CD4-positive, alpha-beta memory T cell (primary cell): ENCODE measurements at regions of chr10 and their contacts with region 1.

Region 1: DNA sequence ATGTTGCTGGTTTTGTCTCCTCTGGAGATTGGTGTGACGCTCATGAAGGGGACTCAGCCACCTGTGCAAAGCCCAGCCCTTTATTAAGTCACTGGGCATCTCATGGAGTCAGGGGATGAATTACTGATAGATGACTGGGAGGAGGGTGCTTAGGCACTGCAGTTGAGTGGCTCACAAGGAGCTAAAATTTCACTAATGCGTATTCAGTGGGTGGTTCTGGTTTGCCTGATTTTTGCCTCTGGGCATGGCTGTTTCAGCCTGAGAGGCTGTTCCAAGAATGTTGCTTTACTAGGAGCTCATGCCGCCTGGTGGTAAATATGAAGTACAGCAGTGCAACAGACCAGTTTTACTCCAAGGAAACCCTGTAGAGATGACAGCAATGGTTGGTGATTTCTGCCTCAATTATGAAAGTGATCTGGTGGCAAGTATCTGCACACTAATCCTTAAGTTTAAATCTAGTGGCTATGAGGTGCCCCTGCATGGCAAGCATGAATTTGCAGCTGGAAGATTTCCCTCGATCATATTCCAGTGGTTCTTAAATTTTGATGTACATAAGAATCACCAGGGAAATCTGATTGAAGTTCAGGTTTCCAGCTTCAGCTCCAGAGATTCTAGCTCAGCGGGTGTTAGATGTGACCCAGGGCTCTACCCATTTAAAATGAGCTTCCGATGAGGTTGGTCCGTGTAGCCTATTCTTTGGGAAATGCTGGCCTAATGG is 19.9 kb downstream of the ACTA2 start:
- DNase-seq: peak; percentile 48 to 59 (median 55)
- H3K4me3 ChIP-seq: no peak overlapping the region
- H3K4me3 Mint-ChIP-seq: no peak overlapping the region
- H3K27ac ChIP-seq: no peak overlapping the region
- H3K27ac Mint-ChIP-seq: peak overlapping the region in 5 of 7 donors; percentile 13 to 76 (median 60)
- H3K4me1 ChIP-seq: peaks cover 15% of the 10 kb centered on the region
- H3K4me1 Mint-ChIP-seq: peaks cover 13 to 22% (median 15%) of the 10 kb centered on the region in 4 donors
- H3K27me3 ChIP-seq: no peaks in the 10 kb centered on the region
- H3K27me3 Mint-ChIP-seq: no peaks in the 10 kb centered on the region

Region 2: GRCh38 chr10:88565072-88565471 is 367.6 kb before region 1 on chr10:
- CTCF ChIA-PET with region 1: interaction called, 8 read pairs
- POLR2A ChIA-PET with region 1: no interaction called
- intact Hi-C with region 1: loop called (anchors 1 kb)
- DNase-seq: peak in 1 of 5 donors; percentile 17
- H3K4me3 ChIP-seq: no peak overlapping the region
- H3K4me3 Mint-ChIP-seq: no peak overlapping the region
- H3K27ac ChIP-seq: no peak overlapping the region
- H3K27ac Mint-ChIP-seq: no peak overlapping the region
- H3K4me1 ChIP-seq: peaks cover 5% of the 10 kb centered on the region
- H3K4me1 Mint-ChIP-seq: peaks cover 3 to 6% (median 6%) of the 10 kb centered on the region in 4 donors
- H3K27me3 ChIP-seq: no peaks in the 10 kb centered on the region
- H3K27me3 Mint-ChIP-seq: peaks cover 0 to 2% of the 10 kb centered on the region in 2 donors

Region 3: DNA sequence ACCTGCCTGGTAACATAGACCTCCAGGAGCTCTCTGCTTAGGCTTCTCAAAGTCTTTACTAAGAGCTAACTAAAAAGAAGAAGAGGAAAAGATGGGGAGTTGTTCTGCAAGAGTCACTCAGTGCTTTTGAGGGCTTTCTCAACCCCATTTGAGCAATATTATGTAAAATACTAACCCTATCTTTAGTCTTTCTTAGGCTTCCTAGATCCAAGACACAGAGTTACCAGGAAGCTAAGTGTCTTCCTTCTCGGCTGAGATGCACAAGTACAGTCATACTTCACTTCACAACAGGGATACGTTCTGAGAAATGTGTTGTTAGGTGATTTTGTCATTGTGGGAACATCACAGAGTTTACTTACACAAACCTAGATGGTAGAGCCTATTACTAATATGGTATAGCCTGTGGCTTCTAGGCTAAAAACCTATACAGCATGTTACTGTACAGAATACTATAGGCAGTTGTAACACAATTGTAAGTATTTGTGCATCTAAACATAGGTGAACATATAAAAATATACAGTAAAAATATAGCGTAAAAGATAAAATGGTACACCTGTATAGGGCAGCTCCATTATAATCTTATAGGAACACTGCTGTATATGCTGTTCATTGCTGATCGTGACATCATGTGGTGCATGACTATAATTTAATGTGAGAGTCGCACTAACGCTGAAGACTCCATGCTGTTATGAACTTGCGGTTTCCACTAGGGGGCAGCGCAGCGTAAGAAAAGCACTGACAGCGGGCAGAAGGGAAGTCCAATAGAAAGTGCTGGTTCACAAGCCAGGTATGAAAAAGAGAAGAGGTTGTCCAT is 97.4 kb before region 1 on chr10:
- CTCF ChIA-PET with region 1: interaction called, 507 read pairs
- POLR2A ChIA-PET with region 1: interaction called, 23 read pairs
- intact Hi-C with region 1: loop called (anchors 1 kb)
- DNase-seq: peak; percentile 80 to 86 (median 82)
- H3K4me3 ChIP-seq: no peak overlapping the region
- H3K4me3 Mint-ChIP-seq: no peak overlapping the region
- H3K27ac ChIP-seq: no peak overlapping the region
- H3K27ac Mint-ChIP-seq: peak overlapping the region in 1 of 7 donors; percentile 29
- H3K4me1 ChIP-seq: peaks cover 46% of the 10 kb centered on the region
- H3K4me1 Mint-ChIP-seq: peaks cover 26 to 34% (median 30%) of the 10 kb centered on the region in 4 donors
- H3K27me3 ChIP-seq: no peaks in the 10 kb centered on the region
- H3K27me3 Mint-ChIP-seq: no peaks in the 10 kb centered on the region

Region 4: DNA sequence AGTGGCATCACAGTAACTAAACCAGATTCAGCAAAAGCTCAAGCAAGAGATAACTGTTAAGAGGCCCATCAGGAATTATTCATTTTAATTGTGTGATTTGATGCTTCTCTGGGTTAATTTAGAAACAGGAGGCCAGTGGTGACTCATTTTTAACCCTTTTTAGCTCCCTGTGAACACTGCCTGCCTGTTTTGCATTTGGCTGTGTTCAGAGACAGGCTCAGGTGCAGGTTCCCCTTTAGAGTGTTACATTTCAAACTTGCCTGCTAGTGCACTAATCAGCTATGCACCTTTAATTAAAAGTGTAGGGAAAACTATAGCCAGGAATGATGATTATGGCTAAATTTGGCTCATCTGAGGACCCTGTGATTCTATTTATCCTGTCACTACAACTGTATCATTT is 46.1 kb before region 1 on chr10:
- CTCF ChIA-PET with region 1: interaction called, 30 read pairs
- POLR2A ChIA-PET with region 1: interaction called, 4 read pairs
- intact Hi-C with region 1: no loop called
- DNase-seq: no peak
- H3K4me3 ChIP-seq: no peak overlapping the region
- H3K4me3 Mint-ChIP-seq: no peak overlapping the region
- H3K27ac ChIP-seq: no peak overlapping the region
- H3K27ac Mint-ChIP-seq: no peak overlapping the region
- H3K4me1 ChIP-seq: peaks cover 84% of the 10 kb centered on the region
- H3K4me1 Mint-ChIP-seq: peaks cover 63 to 84% (median 72%) of the 10 kb centered on the region in 4 donors
- H3K27me3 ChIP-seq: no peaks in the 10 kb centered on the region
- H3K27me3 Mint-ChIP-seq: no peaks in the 10 kb centered on the region

Region 5: GRCh38 chr10:88979153-88979562 is 46.5 kb after region 1 on chr10:
- CTCF ChIA-PET with region 1: interaction called, 22 read pairs
- POLR2A ChIA-PET with region 1: no interaction called
- intact Hi-C with region 1: no loop called
- DNase-seq: no peak
- H3K4me3 ChIP-seq: no peak overlapping the region
- H3K4me3 Mint-ChIP-seq: peak overlapping the region in 3 of 8 donors; percentile 17 to 57 (median 57)
- H3K27ac ChIP-seq: no peak overlapping the region
- H3K27ac Mint-ChIP-seq: peak overlapping the region in 3 of 7 donors; percentile 12 to 60 (median 32)
- H3K4me1 ChIP-seq: peaks cover 27% of the 10 kb centered on the region
- H3K4me1 Mint-ChIP-seq: peaks cover 21 to 40% (median 27%) of the 10 kb centered on the region in 4 donors
- H3K27me3 ChIP-seq: no peaks in the 10 kb centered on the region
- H3K27me3 Mint-ChIP-seq: no peaks in the 10 kb centered on the region

Region 6: GRCh38 chr10:89029785-89030437 is 97.2 kb after region 1 on chr10:
- CTCF ChIA-PET with region 1: interaction called, 45 read pairs
- POLR2A ChIA-PET with region 1: interaction called, 3 read pairs
- intact Hi-C with region 1: loop called (anchors 1 kb)
- DNase-seq: peak; percentile 48 to 63 (median 59)
- H3K4me3 ChIP-seq: no peak overlapping the region
- H3K4me3 Mint-ChIP-seq: peak overlapping the region in 1 of 8 donors; percentile 17
- H3K27ac ChIP-seq: no peak overlapping the region
- H3K27ac Mint-ChIP-seq: peak overlapping the region in 2 of 7 donors; percentile 5 to 42
- H3K4me1 ChIP-seq: peaks cover 4% of the 10 kb centered on the region
- H3K4me1 Mint-ChIP-seq: peaks cover 7 to 14% (median 9%) of the 10 kb centered on the region in 4 donors
- H3K27me3 ChIP-seq: no peaks in the 10 kb centered on the region
- H3K27me3 Mint-ChIP-seq: no peaks in the 10 kb centered on the region

Region 7: DNA sequence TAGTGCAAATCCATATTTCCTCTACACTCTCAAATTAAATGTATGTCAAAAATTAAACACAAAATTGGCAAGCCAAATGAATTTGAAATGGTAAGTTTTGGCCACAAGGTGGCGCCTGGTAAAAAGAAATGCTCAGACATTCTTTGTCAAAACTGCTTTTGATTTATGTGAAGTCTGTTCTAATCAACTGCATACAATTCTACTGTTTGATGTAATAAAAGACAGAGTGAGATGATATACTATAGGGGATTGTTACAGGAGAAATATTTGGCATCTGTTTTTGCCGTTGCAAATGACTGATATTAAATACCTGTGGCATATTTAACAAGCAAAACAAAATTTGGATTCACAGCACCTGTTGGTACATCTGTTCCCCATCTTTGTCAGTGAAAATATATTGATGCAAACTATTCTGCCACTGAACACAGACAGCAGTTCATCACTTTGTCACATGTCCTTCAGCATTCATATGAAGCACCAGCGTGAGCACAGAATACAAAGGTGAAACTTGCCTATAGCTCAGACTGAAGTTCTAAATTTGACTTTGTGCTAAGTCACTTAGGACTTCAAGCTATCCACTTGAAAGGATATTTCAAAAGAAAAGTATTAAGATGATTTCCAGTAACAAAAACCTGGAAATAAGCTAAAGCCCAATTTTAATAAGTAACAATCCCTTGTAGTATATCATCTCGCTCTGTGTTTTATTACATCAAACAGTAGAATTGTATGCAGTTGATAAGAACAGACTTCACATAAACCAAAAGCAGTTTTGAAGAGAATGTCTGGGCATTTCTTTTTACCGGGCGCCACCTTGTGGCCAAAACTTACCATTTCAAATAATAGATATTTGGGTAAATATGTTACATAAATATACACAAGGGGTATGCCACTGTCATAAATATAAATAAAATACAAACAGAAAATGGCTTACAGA is 284.6 kb after region 1 on chr10:
- CTCF ChIA-PET with region 1: interaction called, 108 read pairs
- POLR2A ChIA-PET with region 1: interaction called, 8 read pairs
- intact Hi-C with region 1: loop called (anchors 1 kb)
- DNase-seq: peak; percentile 59 to 64 (median 61)
- H3K4me3 ChIP-seq: no peak overlapping the region
- H3K4me3 Mint-ChIP-seq: peak overlapping the region in 2 of 8 donors; percentile 29 to 67
- H3K27ac ChIP-seq: peak overlapping the region; percentile 33
- H3K27ac Mint-ChIP-seq: peak overlapping the region in 4 of 7 donors; percentile 4 to 90 (median 70)
- H3K4me1 ChIP-seq: peaks cover 7% of the 10 kb centered on the region
- H3K4me1 Mint-ChIP-seq: peaks cover 9 to 11% (median 10%) of the 10 kb centered on the region in 4 donors
- H3K27me3 ChIP-seq: no peaks in the 10 kb centered on the region
- H3K27me3 Mint-ChIP-seq: no peaks in the 10 kb centered on the region

Region 8: GRCh38 chr10:89869180-89869579 is 936.5 kb after region 1 on chr10:
- CTCF ChIA-PET with region 1: no interaction called
- POLR2A ChIA-PET with region 1: no interaction called
- intact Hi-C with region 1: no loop called
- DNase-seq: no peak
- H3K4me3 ChIP-seq: no peak overlapping the region
- H3K4me3 Mint-ChIP-seq: no peak overlapping the region
- H3K27ac ChIP-seq: no peak overlapping the region
- H3K27ac Mint-ChIP-seq: no peak overlapping the region
- H3K4me1 ChIP-seq: no peaks in the 10 kb centered on the region
- H3K4me1 Mint-ChIP-seq: no peaks in the 10 kb centered on the region
- H3K27me3 ChIP-seq: no peaks in the 10 kb centered on the region
- H3K27me3 Mint-ChIP-seq: peaks cover 13 to 16% of the 10 kb centered on the region in 2 donors